HEK293 (cell line): ENCODE measurements at regions of chr2 and their contacts with region 1.

Region 1: DNA sequence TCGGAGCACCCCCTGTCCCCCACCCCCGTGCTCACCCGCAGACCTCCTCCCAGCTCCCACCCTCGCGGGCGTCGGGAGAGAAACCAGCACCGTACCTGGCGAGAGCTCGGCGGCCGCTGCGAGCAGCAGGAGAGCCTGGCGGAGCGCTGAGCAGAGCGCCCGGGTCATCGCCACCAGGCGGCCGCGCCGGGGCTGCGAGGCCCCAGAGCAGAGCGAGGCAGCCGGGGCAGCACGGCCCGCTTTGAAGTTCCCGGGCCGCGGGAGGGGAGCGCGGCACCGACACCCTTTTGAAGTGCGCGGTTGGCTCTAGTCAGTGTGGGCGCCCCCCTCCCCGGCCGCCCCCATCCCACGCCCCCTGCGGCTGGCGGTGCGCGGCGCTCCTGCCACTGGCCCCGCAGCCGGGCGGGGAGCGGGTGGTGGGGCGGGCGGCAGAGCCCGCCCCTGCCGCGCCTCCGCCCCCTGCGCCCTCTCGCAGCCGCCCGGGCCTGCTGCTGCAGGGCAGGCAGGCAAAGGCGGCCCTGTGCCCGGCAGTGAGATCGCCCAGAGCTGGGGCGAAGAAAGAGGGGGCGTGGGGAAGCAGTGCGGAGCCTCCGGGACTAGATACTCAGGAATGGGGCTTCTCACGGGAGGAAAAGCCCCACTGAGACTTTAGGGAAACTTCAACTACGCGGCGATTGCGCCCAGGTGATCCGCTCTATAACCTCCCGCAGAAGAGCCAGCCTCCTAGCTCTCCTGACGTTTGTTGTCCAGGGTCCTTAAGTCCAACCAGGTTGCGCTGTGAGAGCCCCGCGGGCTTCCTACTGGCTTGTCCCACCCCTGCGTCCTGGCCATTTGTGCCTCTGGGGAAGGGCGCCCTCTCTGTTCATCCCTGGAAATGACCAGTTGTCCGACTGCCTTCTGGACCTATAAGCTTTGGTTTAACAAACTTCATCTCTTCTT is at the start of gene ACVR1C:
- H3K4me3 ChIP-seq: peak within 1 kb of the TSS; percentile 61
- H3K27ac ChIP-seq: peak within 1 kb of the TSS; percentile 62; the same call in 1 of the 2 replicates
- H3K4me1 ChIP-seq: no peaks in the 10 kb centered on the region
- CTCF ChIP-seq: peak; percentile 53

Region 2: DNA sequence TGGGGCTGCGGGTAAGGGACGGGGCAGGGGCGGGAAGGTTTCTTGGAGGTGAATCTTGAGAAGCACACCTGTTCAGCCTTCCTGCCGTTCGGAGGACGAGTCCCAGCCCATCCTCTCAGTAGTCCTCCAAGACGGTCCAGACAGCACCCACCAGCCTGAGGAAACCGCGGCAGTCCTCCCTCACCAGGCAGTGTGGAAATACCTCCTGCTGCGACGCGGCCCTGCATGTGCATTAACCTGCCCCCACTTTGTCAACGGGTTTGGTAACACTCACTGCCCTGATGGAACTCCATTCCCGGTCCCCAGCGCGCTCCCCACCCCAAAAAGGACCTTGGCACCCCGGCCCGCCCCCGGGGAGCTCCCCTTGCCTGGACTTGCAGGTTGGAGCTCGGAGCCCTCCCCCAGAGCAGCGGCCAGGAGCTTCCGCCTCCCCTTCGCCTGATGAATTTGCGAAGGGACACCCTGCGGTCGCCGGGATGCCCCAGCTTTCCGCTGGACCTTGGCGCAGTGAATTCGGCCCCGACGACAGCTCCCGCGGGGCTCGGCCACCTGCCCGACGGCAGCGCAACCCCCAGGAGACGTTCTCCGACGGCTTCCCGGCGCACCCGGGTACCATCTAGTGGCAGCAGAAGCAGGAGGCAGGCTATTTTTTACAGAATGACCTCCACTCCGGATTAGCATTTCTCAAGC is 31.6 kb before region 1 on chr2:
- CTCF ChIA-PET with region 1: interaction called, 10 read pairs
- POLR2A ChIA-PET with region 1: no interaction called
- H3K4me3 ChIP-seq: no peak overlapping the region
- H3K27ac ChIP-seq: no peak overlapping the region
- H3K4me1 ChIP-seq: no peaks in the 10 kb centered on the region
- CTCF ChIP-seq: no peak

Region 3: GRCh38 chr2:157644776-157645175 is 16.0 kb after region 1 on chr2:
- CTCF ChIA-PET with region 1: interaction called, 21 read pairs
- POLR2A ChIA-PET with region 1: no interaction called
- H3K4me3 ChIP-seq: no peak overlapping the region
- H3K27ac ChIP-seq: no peak overlapping the region
- H3K4me1 ChIP-seq: no peaks in the 10 kb centered on the region
- CTCF ChIP-seq: no peak